Activated naive CD4-positive, alpha-beta T cell treated with anti-CD3 and anti-CD28 coated beads for 36 hours (primary cell): ENCODE measurements at regions of chr11 and their contacts with region 1.

Region 1: DNA sequence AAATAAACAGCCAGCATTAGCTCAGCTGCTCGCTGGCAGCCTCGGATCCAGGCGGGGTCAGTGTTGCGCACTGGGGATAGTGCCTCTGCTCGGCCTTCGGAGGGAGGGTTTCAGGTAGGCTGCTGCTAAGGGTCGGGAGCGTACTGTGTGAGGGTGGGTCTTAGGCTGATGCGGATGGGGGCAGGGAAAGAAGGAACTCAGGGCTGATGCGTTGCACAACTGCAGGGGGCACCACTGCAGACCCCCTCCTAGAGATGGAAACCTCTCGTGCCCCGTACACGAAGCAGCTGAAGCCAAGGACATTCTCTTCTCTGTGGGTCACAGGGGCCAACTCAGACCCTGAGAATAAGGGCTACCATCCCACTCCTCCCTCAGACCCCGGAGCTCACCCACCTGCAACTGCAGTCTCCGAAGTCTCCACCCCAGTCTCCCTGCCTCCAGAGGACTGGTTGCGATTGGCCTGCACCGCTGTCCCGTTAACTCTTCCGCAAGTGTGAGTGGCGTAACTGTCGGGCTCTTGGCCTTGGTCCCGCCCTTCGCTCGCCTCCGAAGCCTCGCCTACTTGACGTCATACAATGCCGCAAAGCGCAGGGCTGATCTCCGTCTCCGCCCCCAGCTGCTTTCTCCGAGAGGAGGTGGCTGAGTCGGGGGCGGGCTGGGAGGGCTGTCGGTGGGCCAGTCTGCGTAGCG is at the start of gene KBTBD3:
- DNase-seq: peak; percentile 98
- H3K4me3 Mint-ChIP-seq: peak within 1 kb of the TSS; percentile 91
- H3K27ac Mint-ChIP-seq: peak within 1 kb of the TSS; percentile 93
- H3K4me1 Mint-ChIP-seq: peaks cover 47% of the 10 kb centered on the region
- H3K27me3 Mint-ChIP-seq: no peaks in the 10 kb centered on the region
- total RNA-seq, gene KBTBD3: 6.6 to 7.9 TPM

Region 2: GRCh38 chr11:105044921-105045524 is 1032.0 kb before region 1 on chr11 and contains the start of gene CARD16:
- CTCF ChIA-PET with region 1: no interaction called
- intact Hi-C with region 1: loop called (anchors 10 kb)
- DNase-seq: peak; percentile 64
- H3K4me3 Mint-ChIP-seq: peak within 1 kb of the TSS; percentile 83
- H3K27ac Mint-ChIP-seq: peak within 1 kb of the TSS; percentile 82
- H3K4me1 Mint-ChIP-seq: peaks cover 46% of the 10 kb centered on the region
- H3K27me3 Mint-ChIP-seq: no peaks in the 10 kb centered on the region
- total RNA-seq, gene CARD16: 9.5 to 10.9 TPM

Region 3: GRCh38 chr11:106021967-106022794 is 54.9 kb before region 1 on chr11 and contains the start of gene MSANTD4:
- CTCF ChIA-PET with region 1: no interaction called
- intact Hi-C with region 1: loop called (anchors 1 kb)
- DNase-seq: peak; percentile 99
- H3K4me3 Mint-ChIP-seq: peak within 1 kb of the TSS; percentile 93
- H3K27ac Mint-ChIP-seq: peak within 1 kb of the TSS; percentile 85
- H3K4me1 Mint-ChIP-seq: peaks cover 40% of the 10 kb centered on the region
- H3K27me3 Mint-ChIP-seq: peaks cover 3% of the 10 kb centered on the region
- total RNA-seq, gene MSANTD4: 11.5 to 12.0 TPM

Region 4: GRCh38 chr11:106063009-106063408 is 14.1 kb before region 1 on chr11:
- CTCF ChIA-PET with region 1: no interaction called
- intact Hi-C with region 1: loop called (anchors 1 kb)
- DNase-seq: no peak
- H3K4me3 Mint-ChIP-seq: no peak overlapping the region
- H3K27ac Mint-ChIP-seq: no peak overlapping the region
- H3K4me1 Mint-ChIP-seq: peaks cover 12% of the 10 kb centered on the region
- H3K27me3 Mint-ChIP-seq: no peaks in the 10 kb centered on the region

Region 5: DNA sequence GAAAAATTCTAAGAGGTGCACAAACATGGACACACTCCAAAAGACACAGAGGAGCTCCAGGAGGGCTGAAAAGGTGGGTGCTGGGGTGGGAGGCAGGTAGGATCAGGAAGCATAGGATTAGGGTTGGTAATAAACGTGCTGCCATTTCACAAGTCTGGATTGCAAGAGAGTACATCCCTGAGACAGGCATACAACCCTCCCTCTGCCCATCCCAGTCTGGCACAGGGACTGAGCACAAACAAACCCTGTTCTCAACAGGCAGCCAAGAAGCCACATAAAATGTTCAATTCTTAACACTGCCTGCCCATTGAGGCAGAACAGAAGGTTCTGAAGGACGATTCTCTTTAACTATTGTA is 1763.0 kb after region 1 on chr11:
- CTCF ChIA-PET with region 1: no interaction called
- intact Hi-C with region 1: loop called (anchors 2 kb)
- DNase-seq: no peak
- H3K4me3 Mint-ChIP-seq: no peak overlapping the region
- H3K27ac Mint-ChIP-seq: peak overlapping the region; percentile 93
- H3K4me1 Mint-ChIP-seq: peaks cover 68% of the 10 kb centered on the region
- H3K27me3 Mint-ChIP-seq: no peaks in the 10 kb centered on the region